ENCODE measurements at regions of chr11 and their contacts with region 1.

Region 1: DNA sequence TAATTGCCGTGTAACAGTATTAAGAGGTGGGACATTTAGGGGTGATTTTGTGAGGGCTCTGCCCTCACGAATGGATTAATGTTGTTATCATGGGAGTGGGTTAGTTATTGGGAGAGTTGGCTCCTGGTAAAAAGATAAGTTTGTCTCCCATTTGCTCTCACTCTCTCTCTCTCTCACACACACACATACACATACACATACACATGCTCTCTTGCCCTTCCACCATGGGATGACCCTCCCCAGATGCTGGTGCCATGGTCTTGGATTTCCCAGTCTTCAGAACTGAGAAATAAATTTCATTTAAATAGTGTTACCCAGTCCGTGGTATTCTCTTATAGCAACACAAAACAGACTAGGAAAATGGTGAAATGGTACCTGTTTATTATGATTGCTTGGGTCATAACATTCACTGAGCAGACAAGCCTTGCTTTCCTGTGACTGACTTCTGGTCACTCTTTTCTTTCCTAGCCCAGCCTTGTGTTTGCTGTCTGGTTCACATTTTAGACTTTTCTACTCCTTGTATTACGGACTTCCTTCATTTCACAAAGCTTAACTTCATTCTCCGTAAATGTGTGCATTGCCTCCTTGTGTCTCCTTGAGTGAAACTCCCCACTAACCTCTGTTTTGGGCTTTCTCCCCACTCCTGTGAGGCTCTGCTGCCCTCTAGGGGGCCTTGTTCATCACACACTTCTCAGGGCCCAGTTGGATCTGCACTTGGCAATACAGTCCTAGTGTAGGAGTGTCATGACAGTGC is 206.5 kb upstream of the CTSC start:
- DNase-seq: peak; percentile 86
- H3K4me3 Mint-ChIP-seq: no peak overlapping the region
- H3K27ac Mint-ChIP-seq: no peak overlapping the region
- H3K4me1 Mint-ChIP-seq: no peaks in the 10 kb centered on the region
- H3K27me3 Mint-ChIP-seq: no peaks in the 10 kb centered on the region

Region 2: GRCh38 chr11:87352759-87353707 is 1191.0 kb before region 1 on chr11:
- CTCF ChIA-PET with region 1: no interaction called
- intact Hi-C with region 1: loop called (anchors 1 kb)
- DNase-seq: peak; percentile 89
- H3K4me3 Mint-ChIP-seq: no peak overlapping the region
- H3K27ac Mint-ChIP-seq: no peak overlapping the region
- H3K4me1 Mint-ChIP-seq: peaks cover 10% of the 10 kb centered on the region
- H3K27me3 Mint-ChIP-seq: peaks cover 6% of the 10 kb centered on the region

Region 3: GRCh38 chr11:87878373-87878779 is 665.7 kb before region 1 on chr11:
- CTCF ChIA-PET with region 1: no interaction called
- intact Hi-C with region 1: loop called (anchors 1 kb)
- DNase-seq: no peak
- H3K4me3 Mint-ChIP-seq: no peak overlapping the region
- H3K27ac Mint-ChIP-seq: no peak overlapping the region
- H3K4me1 Mint-ChIP-seq: no peaks in the 10 kb centered on the region
- H3K27me3 Mint-ChIP-seq: peaks cover 2% of the 10 kb centered on the region

Region 4: GRCh38 chr11:88103337-88104206 is 440.5 kb before region 1 on chr11:
- CTCF ChIA-PET with region 1: interaction called, 8 read pairs
- intact Hi-C with region 1: loop called (anchors 1 kb)
- DNase-seq: peak; percentile 35
- H3K4me3 Mint-ChIP-seq: no peak overlapping the region
- H3K27ac Mint-ChIP-seq: no peak overlapping the region
- H3K4me1 Mint-ChIP-seq: no peaks in the 10 kb centered on the region
- H3K27me3 Mint-ChIP-seq: peaks cover 12% of the 10 kb centered on the region

Region 5: DNA sequence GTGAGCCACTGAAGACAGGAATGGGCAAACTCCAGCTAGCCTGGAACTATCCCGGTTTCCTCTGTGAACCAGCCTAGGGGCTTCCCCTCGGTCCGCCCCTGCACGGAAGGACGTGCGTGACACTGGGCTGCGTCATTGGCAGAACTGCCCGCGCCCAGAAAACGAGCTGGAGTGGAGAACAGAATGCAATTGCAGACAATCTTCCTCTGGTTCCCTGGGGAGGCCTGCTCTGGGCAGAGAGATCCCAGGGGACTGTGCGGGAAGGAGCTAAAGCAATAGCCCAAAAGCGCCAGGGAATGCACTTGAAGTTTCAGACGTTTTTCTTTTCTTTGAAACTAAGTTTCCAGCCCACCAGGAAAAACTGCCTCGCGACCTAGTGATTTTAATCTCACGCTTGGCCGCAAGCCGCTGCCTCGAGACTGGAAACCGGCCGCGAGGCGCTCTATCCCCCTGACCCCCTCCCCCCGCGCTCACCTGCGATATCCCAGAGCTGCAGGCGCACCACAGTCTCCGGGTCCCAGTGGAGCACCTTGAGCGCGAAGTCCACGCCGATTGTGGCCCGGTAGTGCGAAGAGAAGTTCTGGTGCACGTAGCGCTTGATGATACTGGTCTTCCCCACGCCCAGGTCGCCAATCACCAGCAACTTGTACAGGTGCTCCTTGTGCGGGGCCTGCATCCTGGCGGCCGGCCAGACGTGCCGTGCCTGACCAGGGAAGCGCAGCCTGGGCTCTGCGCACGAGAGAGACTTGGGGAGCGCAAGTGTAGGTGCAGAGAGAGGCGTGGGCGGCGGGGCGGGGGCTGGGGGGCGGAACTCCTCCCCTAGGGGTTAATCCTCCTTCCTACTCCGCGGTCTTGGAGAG is 369.1 kb before region 1 on chr11 and contains the start of gene RAB38:
- CTCF ChIA-PET with region 1: no interaction called
- intact Hi-C with region 1: loop called (anchors 2 kb)
- DNase-seq: peak; percentile 75
- H3K4me3 Mint-ChIP-seq: peak within 1 kb of the TSS; percentile 72
- H3K27ac Mint-ChIP-seq: no peak within 1 kb of the TSS
- H3K4me1 Mint-ChIP-seq: peaks cover 31% of the 10 kb centered on the region
- H3K27me3 Mint-ChIP-seq: peaks cover 21% of the 10 kb centered on the region
- total RNA-seq, gene RAB38: 0.69 to 0.72 TPM

Region 6: DNA sequence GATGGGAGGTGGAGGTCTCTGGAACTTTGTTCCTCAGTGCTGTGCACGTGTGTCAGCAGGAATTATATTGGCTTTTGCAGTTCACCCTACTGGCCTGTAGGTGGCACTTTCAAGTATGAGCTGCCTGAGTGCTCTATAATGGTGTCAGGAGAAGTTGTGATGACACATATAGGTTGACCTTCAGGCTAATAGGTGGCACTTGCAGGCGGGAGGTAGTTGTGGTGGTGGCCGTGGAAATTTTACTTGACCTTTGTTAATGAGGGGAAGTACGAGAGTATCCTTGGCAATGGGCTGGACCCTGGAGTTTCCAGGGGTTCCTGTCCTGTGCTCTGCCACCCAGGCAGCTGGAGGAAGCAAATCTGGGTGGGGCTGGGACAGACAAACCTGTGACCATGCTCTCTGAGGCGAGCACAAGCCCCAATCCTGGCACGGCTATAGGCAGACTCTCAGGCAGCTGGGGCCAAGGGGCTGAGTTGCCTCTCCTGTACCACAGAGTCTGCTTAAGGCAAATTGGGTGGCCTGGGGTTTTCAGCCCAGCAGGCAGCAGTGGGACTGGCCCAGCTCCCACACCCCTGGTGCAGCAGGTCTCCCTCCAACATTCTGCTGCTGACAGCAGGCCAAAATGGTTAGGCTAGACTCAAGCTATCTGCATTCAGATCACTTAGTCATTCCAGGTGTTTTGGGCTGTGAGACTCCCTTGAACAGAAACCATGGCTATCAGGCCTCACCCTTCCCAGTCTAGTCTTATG is 59.0 kb before region 1 on chr11:
- CTCF ChIA-PET with region 1: interaction called, 3 read pairs
- intact Hi-C with region 1: loop called (anchors 1 kb)
- DNase-seq: peak; percentile 41
- H3K4me3 Mint-ChIP-seq: no peak overlapping the region
- H3K27ac Mint-ChIP-seq: no peak overlapping the region
- H3K4me1 Mint-ChIP-seq: no peaks in the 10 kb centered on the region
- H3K27me3 Mint-ChIP-seq: no peaks in the 10 kb centered on the region

Measured in activated naive CD4-positive, alpha-beta T cell treated with anti-CD3 and anti-CD28 coated beads for 36 hours (primary cell).